ENCODE measurements at regions of chr9 and their contacts with region 1.

Region 1: DNA sequence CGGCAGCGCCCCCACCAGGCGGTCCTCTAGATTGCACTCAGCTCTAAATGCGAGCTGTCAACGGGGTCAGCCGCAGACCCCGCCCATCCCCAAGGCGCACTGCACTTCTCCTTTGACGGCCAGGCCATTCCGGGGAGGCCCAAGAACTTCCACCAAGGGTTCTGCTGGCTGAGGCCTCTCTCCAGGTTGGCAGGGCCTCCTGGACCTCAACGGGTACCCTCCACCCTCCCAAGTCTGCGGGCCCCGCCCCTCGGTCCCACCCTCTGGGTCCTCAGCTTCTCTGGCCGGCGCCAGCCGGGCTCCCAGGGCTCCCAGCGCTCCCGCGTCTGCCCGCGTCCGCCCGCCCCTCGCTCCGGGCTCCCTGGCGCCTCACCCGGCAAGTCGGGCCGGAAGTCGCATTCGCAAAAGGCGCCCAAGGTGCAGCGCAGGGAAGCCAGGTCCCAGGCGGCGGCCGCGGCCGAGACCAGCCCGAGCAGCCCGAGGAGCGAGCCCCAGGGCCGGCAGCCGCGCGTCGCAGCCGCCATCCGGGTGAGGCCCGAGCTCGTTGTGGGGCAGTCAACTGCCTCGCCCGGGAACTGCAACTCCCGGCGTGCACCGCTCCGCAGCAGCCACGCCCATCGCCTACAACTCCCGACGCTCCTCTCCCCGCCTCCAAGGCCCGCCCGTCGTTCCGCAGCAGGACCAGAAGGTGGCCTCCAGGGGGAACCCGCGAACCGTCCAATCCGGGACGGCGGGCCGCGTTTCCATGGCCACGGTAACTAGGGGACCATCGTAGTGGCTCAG is at the start of gene TOR2A:
- DNase-seq: peak; percentile 98
- H3K4me3 Mint-ChIP-seq: peak within 1 kb of the TSS; percentile 91
- H3K27ac Mint-ChIP-seq: peak within 1 kb of the TSS; percentile 95
- H3K4me1 Mint-ChIP-seq: peaks cover 11% of the 10 kb centered on the region
- H3K27me3 Mint-ChIP-seq: no peaks in the 10 kb centered on the region
- total RNA-seq, gene TOR2A: 20.2 and 20.6 TPM in 2 replicates

Region 2: DNA sequence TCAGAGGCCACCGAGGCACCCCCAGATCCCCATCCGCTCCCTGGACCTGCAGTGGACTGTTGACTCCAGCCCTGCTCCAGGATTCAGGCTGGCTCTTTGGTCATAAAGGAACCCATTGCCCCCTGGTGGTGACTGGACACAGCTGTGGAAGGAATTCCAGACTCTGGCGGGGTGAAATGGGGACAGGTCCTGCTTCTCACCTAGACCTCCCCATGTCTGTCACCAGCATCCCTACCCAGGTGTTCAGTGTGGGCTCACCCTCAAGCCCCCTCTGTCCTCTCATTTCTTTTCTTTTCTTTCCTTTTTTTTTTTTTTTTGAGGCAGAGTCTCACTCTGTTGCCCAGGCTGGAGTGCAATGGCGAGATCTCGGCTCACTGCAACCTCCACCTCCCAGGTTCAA is 148.4 kb before region 1 on chr9:
- intact Hi-C with region 1: loop called (anchors 1 kb)
- DNase-seq: no peak
- H3K4me3 Mint-ChIP-seq: no peak overlapping the region
- H3K27ac Mint-ChIP-seq: no peak overlapping the region
- H3K4me1 Mint-ChIP-seq: peaks cover 8% of the 10 kb centered on the region
- H3K27me3 Mint-ChIP-seq: peaks cover 13% of the 10 kb centered on the region

Region 3: DNA sequence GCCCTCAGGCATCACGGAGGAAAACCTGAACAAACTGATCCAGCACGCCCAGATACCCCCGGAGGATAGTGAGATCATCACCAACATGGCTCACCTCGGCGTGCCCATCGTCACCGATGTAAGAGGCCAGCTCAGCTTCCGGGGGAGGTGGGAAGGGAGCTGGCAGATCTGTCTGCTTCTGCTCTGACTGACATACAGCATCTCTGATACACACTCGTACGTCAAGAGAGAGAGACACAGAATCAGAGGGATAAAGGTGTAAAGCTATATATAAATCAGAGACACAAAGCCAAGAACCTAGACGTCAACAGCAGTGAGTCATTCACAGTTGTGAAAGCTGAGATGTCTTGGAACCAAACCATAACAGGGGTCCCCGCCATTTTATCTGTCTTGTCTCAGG is 58.3 kb before region 1 on chr9:
- intact Hi-C with region 1: no loop called
- DNase-seq: no peak
- H3K4me3 Mint-ChIP-seq: no peak overlapping the region
- H3K27ac Mint-ChIP-seq: no peak overlapping the region
- H3K4me1 Mint-ChIP-seq: no peaks in the 10 kb centered on the region
- H3K27me3 Mint-ChIP-seq: no peaks in the 10 kb centered on the region

Region 4: GRCh38 chr9:127770905-127771569 is 36.1 kb after region 1 on chr9:
- intact Hi-C with region 1: loop called (anchors 1 kb)
- DNase-seq: peak; percentile 98
- H3K4me3 Mint-ChIP-seq: peak overlapping the region; percentile 85
- H3K27ac Mint-ChIP-seq: peak overlapping the region; percentile 92
- H3K4me1 Mint-ChIP-seq: peaks cover 56% of the 10 kb centered on the region
- H3K27me3 Mint-ChIP-seq: no peaks in the 10 kb centered on the region

Region 5: GRCh38 chr9:127869310-127870152 is 134.6 kb after region 1 on chr9:
- intact Hi-C with region 1: loop called (anchors 2 kb)
- DNase-seq: peak; percentile 69
- H3K4me3 Mint-ChIP-seq: no peak overlapping the region
- H3K27ac Mint-ChIP-seq: no peak overlapping the region
- H3K4me1 Mint-ChIP-seq: peaks cover 12% of the 10 kb centered on the region
- H3K27me3 Mint-ChIP-seq: no peaks in the 10 kb centered on the region